ENCODE measurements at regions of chr18 and their contacts with region 1.

Region 1: GRCh38 chr18:21163647-21164547 is 52.3 kb upstream of the ROCK1 start:
- DNase-seq: no peak
- ATAC-seq: peak; percentile 68 to 92

Region 2: GRCh38 chr18:21053127-21053526 is 110.8 kb before region 1 on chr18:
- intact Hi-C with region 1: no loop called
- DNase-seq: no peak
- ATAC-seq: peak; percentile 78 to 94

Region 3: GRCh38 chr18:21230436-21230835 is 66.5 kb after region 1 on chr18:
- intact Hi-C with region 1: loop called in 1 of 2 experiments (anchors 10 kb)
- DNase-seq: no peak
- ATAC-seq: no peak